Right cardiac atrium (tissue), 5 donors: ENCODE measurements at regions of chr17 and their contacts with region 1.

Region 1: DNA sequence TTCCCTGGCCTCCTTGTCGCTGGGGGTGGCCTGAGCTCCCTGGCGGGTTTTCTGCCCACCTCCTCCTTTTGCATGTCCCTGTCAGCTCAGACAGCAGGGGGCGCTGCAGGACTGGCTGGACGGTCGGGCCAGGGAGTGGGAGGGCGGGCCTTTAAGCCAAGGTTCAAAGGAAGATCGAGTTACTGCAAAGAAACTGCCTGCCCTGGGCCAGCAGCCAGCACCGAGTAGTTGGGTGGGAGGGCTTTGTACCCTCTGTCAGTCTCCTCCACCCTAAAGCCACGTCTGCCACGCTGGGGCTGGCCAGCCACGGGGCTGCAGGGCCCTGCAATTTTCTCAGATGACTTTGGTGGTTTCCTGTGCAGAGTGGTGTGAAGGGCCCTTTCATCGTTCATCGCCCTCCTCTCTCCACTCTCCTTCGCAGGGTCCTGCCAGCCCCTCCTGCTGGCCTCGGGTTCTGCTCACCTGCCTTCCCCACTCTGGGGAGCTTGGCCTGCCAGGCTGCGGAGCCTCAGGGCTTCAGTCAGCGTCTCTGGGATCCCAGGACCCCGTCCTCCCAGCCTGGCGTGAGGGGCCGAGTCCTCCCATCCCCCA is 12.3 kb downstream of the GPR142 start:
- DNase-seq: peak; percentile 92 to 98 (median 97)
- ATAC-seq: peak; percentile 94
- H3K4me3 ChIP-seq: no peak overlapping the region
- H3K27ac ChIP-seq: no peak overlapping the region
- H3K4me1 ChIP-seq: no peaks in the 10 kb centered on the region
- H3K27me3 ChIP-seq: no peaks in the 10 kb centered on the region

Region 2: GRCh38 chr17:74457146-74457819 is 77.7 kb after region 1 on chr17:
- intact Hi-C with region 1: loop called (anchors 1 to 2 kb)
- DNase-seq: peak; percentile 82 to 94 (median 93)
- ATAC-seq: peak in 1 of 2 donors; percentile 13
- H3K4me3 ChIP-seq: no peak overlapping the region
- H3K27ac ChIP-seq: no peak overlapping the region
- H3K4me1 ChIP-seq: peaks cover 15% of the 10 kb centered on the region
- H3K27me3 ChIP-seq: no peaks in the 10 kb centered on the region